ENCODE measurements at regions of chr1 and their contacts with region 1.

Region 1: DNA sequence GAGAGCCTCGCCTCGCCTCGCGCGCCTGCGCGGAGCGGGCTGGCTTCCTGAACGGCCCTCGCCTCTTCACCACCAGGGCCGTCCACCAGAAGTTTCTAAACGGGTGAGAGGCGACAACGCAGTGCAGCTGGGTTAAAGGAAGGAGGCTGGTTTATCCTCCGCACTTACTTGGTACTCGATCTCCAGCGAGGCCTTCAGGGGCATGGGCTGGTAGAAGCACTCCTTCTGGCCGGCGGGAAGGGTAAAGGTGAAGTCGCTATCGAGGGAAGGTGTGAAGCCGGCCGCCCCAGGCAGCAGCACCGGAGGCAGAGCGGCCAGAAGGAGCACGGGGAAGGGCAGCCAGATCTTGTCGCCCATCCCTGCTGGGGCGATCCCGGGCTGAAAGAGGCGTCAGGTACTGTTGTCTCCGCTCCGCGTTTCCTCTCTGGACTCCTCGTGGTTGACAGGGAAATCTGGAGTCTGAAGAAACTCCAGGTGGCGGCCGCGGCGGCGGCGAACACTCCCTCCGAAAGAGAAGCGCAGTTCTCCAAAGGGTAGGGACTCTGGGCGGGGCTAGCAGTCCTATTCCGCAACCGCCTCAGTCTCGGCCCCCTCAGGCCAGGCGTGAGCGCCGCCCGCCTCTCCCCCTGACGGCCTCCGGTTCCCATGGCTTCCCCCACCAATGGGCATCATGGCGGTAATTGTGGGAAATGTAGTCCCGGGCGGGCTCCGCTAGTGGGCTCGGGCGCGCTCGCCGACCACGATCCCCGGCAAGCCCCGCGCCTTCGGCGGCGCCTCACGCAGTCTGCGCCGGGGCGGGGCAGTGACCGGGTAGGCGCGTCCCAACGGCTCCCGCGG is at the start of gene TMED5:
- DNase-seq: peak; percentile 97
- ATAC-seq: peak; percentile 87
- H3K4me3 Mint-ChIP-seq: peak within 1 kb of the TSS; percentile 89
- H3K27ac Mint-ChIP-seq: peak within 1 kb of the TSS; percentile 100
- H3K4me1 Mint-ChIP-seq: peaks cover 43% of the 10 kb centered on the region
- H3K27me3 Mint-ChIP-seq: no peaks in the 10 kb centered on the region
- CTCF ChIP-seq: no peak
- total RNA-seq, gene TMED5: 29.2 to 31.6 TPM

Region 2: DNA sequence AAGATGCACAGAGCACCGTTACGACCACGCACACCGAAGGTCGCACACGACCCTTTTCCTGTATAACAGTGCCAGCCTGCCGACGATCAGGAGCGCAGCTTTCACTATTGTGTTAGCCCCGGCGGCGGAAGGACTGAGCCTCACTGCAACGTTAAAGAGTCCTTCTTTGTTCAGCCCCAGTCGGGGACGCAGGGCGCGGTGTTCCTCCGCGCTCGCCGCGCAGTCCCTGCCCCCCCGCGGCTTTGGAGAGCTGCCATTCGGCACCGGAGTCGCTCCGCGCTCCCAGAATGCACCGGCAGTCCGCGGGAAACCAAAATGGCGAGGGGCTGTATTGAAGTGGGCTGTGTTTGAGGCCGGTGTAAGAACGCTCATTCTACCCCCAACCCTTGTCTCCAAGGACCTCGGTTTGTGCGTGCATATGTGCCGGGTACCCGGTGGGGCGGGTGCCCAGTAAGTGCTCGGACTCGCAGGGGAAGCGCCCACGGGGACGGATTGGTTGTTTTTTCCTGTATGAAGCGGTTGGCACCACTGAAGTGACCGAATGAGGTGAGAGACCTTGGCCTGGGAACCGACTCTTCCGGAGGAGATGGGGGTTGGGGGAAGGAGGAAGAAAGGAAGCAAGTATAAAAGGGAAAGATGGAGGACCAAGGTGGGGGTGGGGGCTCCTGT is 101.0 kb before region 1 on chr1 and contains the start of gene MTF2:
- CTCF ChIA-PET with region 1: interaction called, 5 read pairs
- POLR2A ChIA-PET with region 1: interaction called, 4 read pairs
- intact Hi-C with region 1: loop called (anchors 2 kb)
- DNase-seq: peak; percentile 96
- ATAC-seq: peak; percentile 93
- H3K4me3 Mint-ChIP-seq: peak within 1 kb of the TSS; percentile 99
- H3K27ac Mint-ChIP-seq: peak within 1 kb of the TSS; percentile 97
- H3K4me1 Mint-ChIP-seq: peaks cover 34% of the 10 kb centered on the region
- H3K27me3 Mint-ChIP-seq: no peaks in the 10 kb centered on the region
- CTCF ChIP-seq: no peak
- total RNA-seq, gene MTF2: 65.0 to 70.9 TPM

Region 3: GRCh38 chr1:93345633-93346420 is 165.7 kb after region 1 on chr1 and contains the start of gene DR1:
- CTCF ChIA-PET with region 1: no interaction called
- POLR2A ChIA-PET with region 1: no interaction called
- intact Hi-C with region 1: loop called (anchors 5 kb)
- DNase-seq: peak; percentile 92
- ATAC-seq: peak; percentile 84
- H3K4me3 Mint-ChIP-seq: peak within 1 kb of the TSS; percentile 86
- H3K27ac Mint-ChIP-seq: peak within 1 kb of the TSS; percentile 97
- H3K4me1 Mint-ChIP-seq: peaks cover 25% of the 10 kb centered on the region
- H3K27me3 Mint-ChIP-seq: no peaks in the 10 kb centered on the region
- CTCF ChIP-seq: no peak
- total RNA-seq, gene DR1: 71.3 to 79.2 TPM